Sigmoid colon (tissue), 7 donors: ENCODE measurements at regions of chr18 and their contacts with region 1.

Region 1: GRCh38 chr18:50649821-50650220 is 89.9 kb downstream of the MAPK4 start:
- DNase-seq: peak; percentile 95
- H3K4me3 ChIP-seq: no peak overlapping the region
- H3K27ac ChIP-seq: peak overlapping the region; percentile 81 to 94 (median 86)
- H3K4me1 ChIP-seq: peaks cover 0 to 86% (median 58%) of the 10 kb centered on the region in 4 donors
- H3K27me3 ChIP-seq: no peaks in the 10 kb centered on the region
- CTCF ChIP-seq: no peak
- EP300 ChIP-seq: peak; percentile 27 to 95 (median 86)
- POLR2A ChIP-seq: no peak

Region 2: DNA sequence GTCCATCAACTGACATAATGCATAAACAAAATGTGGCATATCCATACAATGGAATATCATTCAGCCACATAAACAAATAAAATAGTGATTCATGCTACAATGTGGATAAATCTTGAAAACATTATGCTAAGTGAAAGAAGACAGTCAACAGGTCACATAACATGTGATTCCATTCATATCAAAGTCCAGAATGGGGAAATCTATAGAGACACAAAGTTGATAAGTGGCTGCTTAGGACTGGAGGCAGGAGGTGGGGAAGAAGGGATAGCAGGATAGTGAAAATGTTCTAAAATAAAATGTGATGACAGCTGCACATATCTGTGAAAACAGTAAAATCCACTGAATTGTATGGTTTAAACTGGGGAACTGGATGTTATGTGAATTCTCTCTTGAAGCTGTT is 402.3 kb before region 1 on chr18:
- intact Hi-C with region 1: no loop called
- DNase-seq: no peak
- H3K4me3 ChIP-seq: no peak overlapping the region
- H3K27ac ChIP-seq: no peak overlapping the region
- H3K4me1 ChIP-seq: no peaks in the 10 kb centered on the region
- H3K27me3 ChIP-seq: no peaks in the 10 kb centered on the region
- CTCF ChIP-seq: no peak
- EP300 ChIP-seq: no peak
- POLR2A ChIP-seq: no peak

Region 3: GRCh38 chr18:50287441-50288347 is 362.1 kb before region 1 on chr18 and contains the start of gene CXXC1:
- intact Hi-C with region 1: loop called (anchors 5 kb)
- DNase-seq: peak; percentile 99
- H3K4me3 ChIP-seq: peak within 1 kb of the TSS; percentile 68 to 85 (median 75)
- H3K27ac ChIP-seq: peak within 1 kb of the TSS; percentile 81 to 88 (median 86)
- H3K4me1 ChIP-seq: peaks cover 0 to 12% (median 8%) of the 10 kb centered on the region in 4 donors
- H3K27me3 ChIP-seq: no peaks in the 10 kb centered on the region
- CTCF ChIP-seq: peak; percentile 43 to 49 (median 47)
- EP300 ChIP-seq: peak in 1 of 4 donors; percentile 11
- POLR2A ChIP-seq: peak in 1 of 2 donors; percentile 22
- total RNA-seq, gene CXXC1: 34.2 to 58.9 (median 51.1) TPM

Region 4: DNA sequence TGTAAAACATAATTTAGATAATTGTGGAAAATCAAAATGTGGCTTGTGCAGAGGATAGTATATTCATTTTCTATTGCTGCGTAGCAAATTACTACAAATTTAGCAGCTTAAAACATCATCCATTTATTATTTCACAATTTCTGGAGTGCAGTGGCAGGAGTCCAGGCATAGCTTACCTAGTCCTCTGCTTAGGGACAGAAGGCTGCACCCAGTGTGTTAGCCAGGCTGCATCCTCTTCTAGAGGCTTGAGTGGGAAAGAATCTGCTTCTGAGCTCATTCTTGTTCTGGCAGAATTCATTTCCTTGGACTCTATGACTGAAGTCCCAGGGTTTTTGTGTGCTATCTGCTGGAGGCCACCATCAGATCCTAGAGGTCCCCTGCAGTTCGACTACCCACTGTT is 130.3 kb after region 1 on chr18:
- intact Hi-C with region 1: loop called (anchors 5 kb)
- DNase-seq: no peak
- H3K4me3 ChIP-seq: no peak overlapping the region
- H3K27ac ChIP-seq: no peak overlapping the region
- H3K4me1 ChIP-seq: peaks cover 0 to 6% (median 0%) of the 10 kb centered on the region in 4 donors
- H3K27me3 ChIP-seq: no peaks in the 10 kb centered on the region
- CTCF ChIP-seq: no peak
- EP300 ChIP-seq: no peak
- POLR2A ChIP-seq: no peak